ENCODE measurements at regions of chr2 and their contacts with region 1.

Region 1: GRCh38 chr2:231692839-231693238 is 15.5 kb upstream of the PTMA start:
- DNase-seq: no peak
- H3K4me3 ChIP-seq: no peak overlapping the region
- H3K27ac ChIP-seq: no peak overlapping the region
- H3K4me1 ChIP-seq: no peaks in the 10 kb centered on the region
- H3K27me3 ChIP-seq: no peaks in the 10 kb centered on the region
- CTCF ChIP-seq: no peak

Region 2: GRCh38 chr2:232333361-232334270 is 640.8 kb after region 1 on chr2:
- intact Hi-C with region 1: loop called (anchors 5 kb)
- DNase-seq: peak; percentile 16 to 62
- H3K4me3 ChIP-seq: no peak overlapping the region
- H3K27ac ChIP-seq: no peak overlapping the region
- H3K4me1 ChIP-seq: no peaks in the 10 kb centered on the region
- H3K27me3 ChIP-seq: no peaks in the 10 kb centered on the region
- CTCF ChIP-seq: no peak

Measured in tibial artery (tissue), 4 donors.